ENCODE measurements at regions of chr9 and their contacts with region 1.

Region 1: DNA sequence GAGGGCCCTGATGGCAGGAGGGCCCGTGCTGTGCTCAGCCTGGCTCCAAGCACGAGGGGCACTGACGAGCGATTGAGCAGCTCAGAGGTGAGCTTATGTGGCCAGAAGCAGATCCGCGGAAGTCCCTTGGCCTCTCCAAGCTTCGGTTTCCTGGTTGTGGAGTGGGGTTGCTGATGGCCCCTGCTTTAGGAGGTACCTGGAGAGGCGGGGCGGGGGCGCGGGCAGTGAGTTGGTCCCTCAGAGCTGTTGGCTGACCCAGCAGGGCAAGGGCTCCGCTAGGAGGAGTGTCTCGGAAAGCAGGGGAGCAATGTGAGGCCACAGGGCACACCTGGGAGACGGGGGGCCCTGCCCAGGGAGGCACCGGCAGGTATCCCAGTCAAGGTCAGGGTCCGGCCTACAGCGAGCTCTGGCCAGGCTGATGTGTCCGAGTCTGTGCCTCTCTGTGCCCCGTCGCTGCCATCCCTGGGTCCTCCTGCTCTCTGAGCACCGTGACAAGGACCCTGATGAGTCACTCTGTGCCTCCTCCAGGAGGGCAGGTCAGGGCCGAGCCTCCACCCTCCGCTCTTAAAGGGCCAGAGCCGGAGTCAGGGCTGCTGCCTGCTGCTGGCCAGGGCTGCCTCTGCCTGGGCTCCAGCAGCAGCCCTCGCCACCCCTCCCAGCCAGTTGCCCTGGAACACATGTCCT is 14.8 kb downstream of the NCS1 start:
- DNase-seq: no peak
- H3K4me3 ChIP-seq: peak overlapping the region; percentile 40
- CTCF ChIP-seq: no peak

Region 2: GRCh38 chr9:130172858-130173665 is 13.9 kb before region 1 on chr9:
- CTCF ChIA-PET with region 1: interaction called, 10 read pairs
- POLR2A ChIA-PET with region 1: interaction called, 7 read pairs
- DNase-seq: no peak
- H3K4me3 ChIP-seq: peak overlapping the region; percentile 74
- CTCF ChIP-seq: peak; percentile 8

Region 3: DNA sequence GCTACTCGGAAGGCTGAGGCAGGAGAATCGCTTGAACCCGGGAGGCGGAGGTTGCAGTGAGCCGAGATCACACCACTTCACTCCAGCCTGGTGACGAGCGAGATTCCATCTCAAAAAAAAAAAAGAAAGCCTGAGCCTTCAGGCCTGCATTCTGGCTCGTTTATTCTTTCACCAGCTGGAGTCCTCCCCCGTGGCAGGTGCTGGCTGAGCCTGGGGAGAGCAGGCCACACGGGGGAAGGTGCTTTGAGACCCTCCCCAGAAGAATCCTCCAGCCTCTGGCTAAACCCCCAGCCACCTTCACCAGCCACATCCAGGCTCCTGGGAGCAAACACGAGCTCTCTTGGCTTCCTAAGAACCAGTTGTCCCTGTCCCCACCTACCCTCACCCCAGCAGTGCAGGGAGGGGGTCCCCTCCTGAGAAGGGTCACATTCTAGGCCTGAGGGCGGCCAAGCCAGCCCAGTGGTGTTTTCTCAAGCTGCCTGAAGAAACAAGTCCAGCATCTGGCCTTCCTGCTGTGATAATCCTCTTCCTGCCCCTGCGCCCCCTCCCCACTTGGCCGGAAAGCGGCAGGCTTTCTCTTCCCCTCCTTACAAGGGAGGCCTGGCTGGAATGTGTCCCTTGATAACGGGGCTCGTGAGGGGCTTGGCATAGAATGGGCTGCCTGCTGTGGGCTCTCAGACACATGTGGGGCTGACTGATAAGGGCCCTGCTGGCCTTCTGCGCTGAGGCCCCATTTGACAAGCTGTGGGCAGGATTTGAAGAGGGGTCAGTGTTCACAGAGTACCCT is 1144.0 kb after region 1 on chr9:
- CTCF ChIA-PET with region 1: no interaction called
- POLR2A ChIA-PET with region 1: no interaction called
- DNase-seq: no peak
- H3K4me3 ChIP-seq: no peak overlapping the region
- CTCF ChIP-seq: no peak

Measured in AG04449 (cell line).